K562 (cell line): ENCODE measurements at regions of chr2 and their contacts with region 1.

Region 1: DNA sequence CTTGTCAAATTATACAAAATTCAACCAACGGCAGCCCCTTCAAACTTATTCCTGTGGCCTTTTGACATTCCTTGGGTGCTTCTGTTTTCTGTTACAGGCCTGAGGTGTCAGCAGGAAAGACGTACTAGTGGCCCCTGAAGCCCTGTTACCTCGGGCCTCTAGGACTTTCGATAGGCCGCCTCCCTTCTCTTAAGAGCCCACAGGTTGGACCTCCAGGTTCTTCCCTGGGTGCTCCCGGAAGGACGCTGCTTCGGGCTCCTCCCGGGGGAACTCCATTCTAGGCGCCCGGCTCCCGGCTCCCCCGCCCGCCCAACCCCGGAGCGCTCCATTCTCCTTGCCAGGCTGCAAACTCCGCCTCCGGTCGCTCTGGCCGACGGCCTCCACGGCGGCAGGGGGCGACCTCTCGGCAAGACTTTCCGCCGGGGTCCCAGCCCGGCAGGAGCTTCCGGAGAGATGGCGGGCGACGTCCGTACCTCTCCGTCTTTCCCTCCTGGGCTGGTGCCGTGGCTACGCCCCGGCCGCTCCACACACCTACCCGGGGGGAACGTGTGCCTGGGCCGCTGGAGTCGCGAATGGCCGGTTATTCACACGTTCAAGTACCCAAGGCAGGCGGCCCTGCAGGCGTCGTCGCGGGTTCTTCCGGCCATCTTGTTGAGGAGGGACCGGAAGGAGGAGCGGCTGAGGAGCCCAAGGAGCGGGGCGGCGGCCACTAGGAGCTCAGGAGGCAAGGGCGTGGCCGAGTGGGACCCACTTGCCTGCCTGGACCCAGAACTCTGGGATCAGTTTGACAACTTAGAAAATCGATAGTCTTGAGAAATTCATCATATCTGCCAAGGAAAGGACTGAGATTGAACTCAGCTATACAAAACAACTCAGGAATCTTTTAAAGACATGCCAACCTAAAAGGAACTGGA is 27.5 kb downstream of the BOLA3 start:
- DNase-seq: peak; percentile 92 to 94 (median 92)
- ATAC-seq: peak; percentile 99
- H3K4me3 ChIP-seq: peak overlapping the region; percentile 73
- H3K27ac ChIP-seq: peak overlapping the region; percentile 96
- H3K4me1 ChIP-seq: peaks cover 2 to 13% of the 10 kb centered on the region in 2 experiments; a peak in 2 of 5 replicates
- H3K27me3 ChIP-seq: no peaks in the 10 kb centered on the region
- CTCF ChIP-seq: peak; percentile 61 to 84 (median 74)
- EP300 ChIP-seq: no peak
- POLR2A ChIP-seq: peak; percentile 90
- RAD21 ChIP-seq: peak in 1 of 2 experiments; percentile 16; a peak in 2 of 4 replicates

Region 2: DNA sequence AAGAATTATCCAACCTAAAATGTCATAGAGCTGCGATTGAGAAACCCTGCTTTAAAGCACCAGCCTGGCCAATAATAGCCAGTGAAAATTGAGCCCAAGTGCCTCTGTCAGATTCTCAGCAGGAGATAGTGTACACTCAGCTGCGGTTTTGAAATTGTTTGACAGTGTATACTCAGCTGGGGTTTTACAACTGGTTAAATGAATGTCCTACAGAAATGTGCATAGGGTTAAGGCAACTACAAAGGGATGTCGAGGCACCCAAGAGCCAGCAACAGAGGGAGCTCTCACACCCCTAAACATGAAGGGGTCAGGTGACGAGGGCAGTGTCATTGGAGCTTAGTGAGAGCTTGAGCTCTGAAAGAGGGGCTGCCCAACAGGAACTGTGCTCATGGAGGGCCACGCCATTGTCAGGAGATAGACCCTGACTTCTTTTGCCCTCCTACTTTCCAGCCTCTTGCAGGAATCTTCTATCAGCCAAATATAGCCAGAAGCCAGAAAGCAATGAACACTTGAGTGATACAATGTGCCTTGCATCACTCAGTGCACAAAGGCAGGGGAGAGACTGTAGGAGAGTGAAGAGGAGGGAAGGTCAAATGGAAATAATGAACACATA is 212.2 kb before region 1 on chr2:
- CTCF ChIA-PET with region 1: no interaction called
- POLR2A ChIA-PET with region 1: no interaction called
- in situ Hi-C with region 1: no loop called
- intact Hi-C with region 1: loop called (anchors 5 kb)
- DNase-seq: peak in 3 of 4 experiments; percentile 27 to 73 (median 63)
- ATAC-seq: peak; percentile 97
- H3K4me3 ChIP-seq: no peak overlapping the region
- H3K27ac ChIP-seq: no peak overlapping the region
- H3K4me1 ChIP-seq: no peaks in the 10 kb centered on the region; a peak in 1 of 5 replicates
- H3K27me3 ChIP-seq: no peaks in the 10 kb centered on the region
- CTCF ChIP-seq: peak; percentile 69 to 78 (median 73)
- EP300 ChIP-seq: no peak
- POLR2A ChIP-seq: no peak
- RAD21 ChIP-seq: peak; percentile 68 to 87

Region 3: DNA sequence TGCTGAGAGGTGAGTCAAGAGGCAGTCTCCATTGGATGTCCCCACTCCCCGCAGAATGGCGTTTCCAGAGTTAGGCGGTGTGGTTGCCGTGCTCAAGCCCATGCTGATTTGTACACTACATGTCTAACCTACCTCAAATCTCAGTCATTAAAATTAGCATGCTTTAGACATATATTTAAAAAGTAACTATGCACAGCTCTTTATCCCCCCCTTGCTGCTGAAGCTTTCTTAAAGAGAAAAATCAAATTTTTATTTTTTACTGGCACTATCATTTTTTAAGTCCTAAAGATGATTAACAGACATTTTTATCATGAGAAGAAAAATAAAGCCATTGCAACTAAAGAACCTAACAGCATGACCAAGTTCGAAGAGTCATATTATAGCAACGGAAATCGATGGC is 15.3 kb before region 1 on chr2:
- CTCF ChIA-PET with region 1: no interaction called
- POLR2A ChIA-PET with region 1: interaction called, 12 read pairs
- in situ Hi-C with region 1: no loop called
- intact Hi-C with region 1: no loop called
- DNase-seq: no peak
- ATAC-seq: no peak
- H3K4me3 ChIP-seq: no peak overlapping the region
- H3K27ac ChIP-seq: no peak overlapping the region
- H3K4me1 ChIP-seq: peaks cover 0 to 7% of the 10 kb centered on the region in 2 experiments; a peak in 1 of 5 replicates
- H3K27me3 ChIP-seq: no peaks in the 10 kb centered on the region
- CTCF ChIP-seq: peak in 1 of 3 experiments; percentile 47; a peak in 2 of 6 replicates
- EP300 ChIP-seq: no peak
- POLR2A ChIP-seq: no peak
- RAD21 ChIP-seq: peak; percentile 35 to 43

Region 4: GRCh38 chr2:74345272-74345943 is 225.2 kb after region 1 on chr2:
- CTCF ChIA-PET with region 1: no interaction called
- POLR2A ChIA-PET with region 1: no interaction called
- in situ Hi-C with region 1: no loop called
- intact Hi-C with region 1: no loop called
- DNase-seq: no peak
- ATAC-seq: no peak
- H3K4me3 ChIP-seq: no peak overlapping the region
- H3K27ac ChIP-seq: no peak overlapping the region
- H3K4me1 ChIP-seq: no peaks in the 10 kb centered on the region
- H3K27me3 ChIP-seq: peaks cover 21 to 32% of the 10 kb centered on the region in 2 experiments; a peak in 4 of 5 replicates
- CTCF ChIP-seq: no peak
- EP300 ChIP-seq: no peak
- POLR2A ChIP-seq: no peak
- RAD21 ChIP-seq: no peak